MCF 10A (cell line): ENCODE measurements at regions of chr1 and their contacts with region 1.

Region 1: GRCh38 chr1:198157241-198157846 is 546 bp downstream of the NEK7 start:
- DNase-seq: peak; percentile 98
- H3K4me3 Mint-ChIP-seq: peak overlapping the region; percentile 85
- H3K27ac Mint-ChIP-seq: peak overlapping the region; percentile 86
- H3K4me1 Mint-ChIP-seq: peaks cover 42% of the 10 kb centered on the region
- H3K27me3 Mint-ChIP-seq: no peaks in the 10 kb centered on the region
- CTCF ChIP-seq: no peak

Region 2: DNA sequence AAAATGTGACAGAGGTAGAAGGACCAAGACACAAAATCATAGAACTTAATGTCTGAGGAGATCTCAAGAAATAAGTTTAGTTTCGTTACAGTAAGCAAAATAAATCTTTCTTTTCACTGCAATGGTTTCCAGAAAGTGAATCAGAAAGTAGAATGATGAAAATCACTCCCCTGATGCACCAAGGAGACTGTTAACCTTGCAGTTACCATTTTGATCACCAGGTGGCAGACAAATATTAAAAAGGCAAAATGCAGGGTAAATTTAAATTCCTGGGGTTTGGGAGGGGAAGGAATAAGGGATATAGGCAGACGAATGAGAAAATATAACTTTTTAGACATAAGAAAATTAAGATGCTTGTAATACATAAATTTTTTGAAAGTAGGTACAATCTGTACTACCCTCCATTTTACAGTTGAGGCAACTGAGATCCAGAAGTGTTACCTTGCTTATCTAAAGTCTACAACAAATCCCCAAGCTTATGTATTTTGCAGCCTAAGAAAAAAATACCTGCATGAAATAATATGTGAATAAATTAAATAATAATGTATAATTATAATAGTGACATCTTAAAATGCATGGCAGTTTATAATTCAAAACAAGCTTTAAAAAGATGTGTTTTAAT is 636.1 kb before region 1 on chr1:
- CTCF ChIA-PET with region 1: no interaction called
- POLR2A ChIA-PET with region 1: no interaction called
- intact Hi-C with region 1: loop called (anchors 10 kb)
- DNase-seq: peak; percentile 67
- H3K4me3 Mint-ChIP-seq: no peak overlapping the region
- H3K27ac Mint-ChIP-seq: no peak overlapping the region
- H3K4me1 Mint-ChIP-seq: peaks cover 5% of the 10 kb centered on the region
- H3K27me3 Mint-ChIP-seq: no peaks in the 10 kb centered on the region
- CTCF ChIP-seq: peak; percentile 88

Region 3: DNA sequence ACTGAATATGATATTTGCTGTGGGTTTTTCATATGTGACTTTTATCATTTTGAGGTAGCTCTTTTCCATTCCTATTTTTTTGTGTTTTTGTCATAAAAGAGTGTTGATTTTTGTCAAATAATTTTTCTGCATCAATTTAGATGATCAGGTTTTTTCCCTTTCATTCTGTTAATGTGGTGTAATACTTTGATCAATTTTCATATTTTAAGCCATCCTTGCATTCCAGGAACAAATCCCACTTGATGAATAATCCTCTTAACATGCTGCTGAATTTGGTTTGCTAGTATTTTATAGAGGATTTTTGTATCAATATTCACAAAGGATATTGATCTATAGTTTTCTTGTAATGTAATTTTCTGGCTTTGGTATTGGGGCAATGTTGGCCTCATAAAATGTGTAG is 280.4 kb before region 1 on chr1:
- CTCF ChIA-PET with region 1: no interaction called
- POLR2A ChIA-PET with region 1: no interaction called
- intact Hi-C with region 1: no loop called
- DNase-seq: no peak
- H3K4me3 Mint-ChIP-seq: no peak overlapping the region
- H3K27ac Mint-ChIP-seq: no peak overlapping the region
- H3K4me1 Mint-ChIP-seq: no peaks in the 10 kb centered on the region
- H3K27me3 Mint-ChIP-seq: no peaks in the 10 kb centered on the region
- CTCF ChIP-seq: no peak

Region 4: DNA sequence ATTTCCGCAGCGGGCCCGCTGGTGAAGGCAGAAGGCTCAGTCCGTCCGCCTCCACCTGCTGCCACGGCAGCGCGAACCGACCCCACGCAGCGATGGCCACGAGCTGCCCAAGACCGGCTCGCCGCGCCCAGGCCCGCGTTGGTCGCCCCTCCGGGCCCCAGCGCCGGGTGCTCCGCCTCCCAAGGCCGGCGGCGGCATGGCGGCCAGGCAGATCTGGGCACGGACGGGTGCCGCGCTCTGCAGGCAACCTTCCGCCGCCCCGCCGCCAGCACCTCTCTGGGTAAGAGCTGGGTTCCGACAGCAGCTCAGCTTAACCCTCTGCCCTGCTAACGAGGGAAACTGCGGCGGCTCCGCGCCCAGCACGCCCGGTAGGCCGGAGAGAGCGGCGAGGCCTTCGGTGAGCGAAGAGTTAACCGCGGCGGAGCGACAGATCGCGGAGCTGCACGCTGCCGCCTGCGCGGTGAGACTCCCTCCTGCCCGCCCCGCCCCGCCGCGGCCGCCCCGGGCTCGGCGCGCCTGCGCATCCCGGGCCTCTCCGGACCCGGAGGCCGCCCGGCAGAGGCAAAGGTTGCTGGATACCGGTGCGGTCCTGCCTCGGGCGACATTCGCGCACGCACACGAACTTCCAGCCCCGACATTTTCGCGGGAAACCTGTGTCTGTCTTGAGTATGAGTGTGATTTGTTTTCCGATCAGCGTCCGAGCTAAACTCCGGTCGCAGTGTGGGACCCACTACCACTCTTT is 254.7 kb before region 1 on chr1 and contains the start of gene C1orf53:
- CTCF ChIA-PET with region 1: interaction called, 4 read pairs
- POLR2A ChIA-PET with region 1: interaction called, 38 read pairs
- intact Hi-C with region 1: no loop called
- DNase-seq: peak; percentile 92
- H3K4me3 Mint-ChIP-seq: peak within 1 kb of the TSS; percentile 86
- H3K27ac Mint-ChIP-seq: peak within 1 kb of the TSS; percentile 93
- H3K4me1 Mint-ChIP-seq: peaks cover 26% of the 10 kb centered on the region
- H3K27me3 Mint-ChIP-seq: no peaks in the 10 kb centered on the region
- CTCF ChIP-seq: no peak
- total RNA-seq, gene C1orf53: 10.7 and 15.1 TPM in 2 replicates

Region 5: GRCh38 chr1:198088360-198089071 is 68.8 kb before region 1 on chr1:
- CTCF ChIA-PET with region 1: interaction called, 12 read pairs
- POLR2A ChIA-PET with region 1: interaction called, 10 read pairs
- intact Hi-C with region 1: loop called (anchors 1 kb)
- DNase-seq: peak; percentile 64
- H3K4me3 Mint-ChIP-seq: no peak overlapping the region
- H3K27ac Mint-ChIP-seq: no peak overlapping the region
- H3K4me1 Mint-ChIP-seq: peaks cover 7% of the 10 kb centered on the region
- H3K27me3 Mint-ChIP-seq: no peaks in the 10 kb centered on the region
- CTCF ChIP-seq: peak; percentile 71

Region 6: DNA sequence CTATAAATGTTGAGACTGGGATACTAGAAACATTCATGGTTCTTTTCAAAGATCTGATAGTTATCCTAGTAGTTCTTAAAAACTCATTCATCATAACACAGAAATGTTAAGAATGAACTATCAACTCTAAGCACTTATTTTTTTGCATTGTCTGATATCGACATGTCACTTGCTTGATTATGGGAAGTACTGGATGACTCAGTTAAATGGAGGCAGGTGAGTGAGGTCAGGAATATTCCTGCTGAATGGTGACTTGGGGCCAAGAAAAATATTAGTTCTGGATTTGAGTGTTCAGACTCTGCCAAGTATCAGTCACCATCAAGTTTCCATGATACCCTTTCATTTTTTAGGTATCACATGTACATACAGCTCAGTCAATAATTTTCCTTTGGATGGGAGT is 63.1 kb after region 1 on chr1:
- CTCF ChIA-PET with region 1: no interaction called
- POLR2A ChIA-PET with region 1: interaction called, 15 read pairs
- intact Hi-C with region 1: loop called (anchors 2 kb)
- DNase-seq: peak; percentile 97
- H3K4me3 Mint-ChIP-seq: peak overlapping the region; percentile 15
- H3K27ac Mint-ChIP-seq: peak overlapping the region; percentile 79
- H3K4me1 Mint-ChIP-seq: peaks cover 28% of the 10 kb centered on the region
- H3K27me3 Mint-ChIP-seq: no peaks in the 10 kb centered on the region
- CTCF ChIP-seq: no peak

Region 7: DNA sequence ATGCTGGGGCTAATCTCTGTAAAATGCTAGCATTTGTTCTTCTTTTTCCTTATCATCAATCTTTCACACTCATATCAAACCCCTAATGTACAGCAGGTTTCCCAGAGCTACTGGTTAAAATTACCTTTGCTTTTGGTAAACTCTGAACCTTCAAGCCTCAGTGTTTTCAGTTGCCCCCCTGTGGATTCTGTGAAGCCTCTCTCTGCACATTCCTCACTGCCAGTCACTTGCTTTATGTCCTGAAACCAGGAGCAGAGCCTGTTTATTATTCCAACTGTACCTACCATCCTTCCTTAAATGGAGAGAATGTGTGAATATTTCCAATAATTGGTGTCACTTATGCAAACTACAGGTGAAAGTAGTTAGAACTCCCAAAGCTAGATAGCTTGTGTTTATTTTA is 133.7 kb after region 1 on chr1:
- CTCF ChIA-PET with region 1: interaction called, 5 read pairs
- POLR2A ChIA-PET with region 1: interaction called, 17 read pairs
- intact Hi-C with region 1: no loop called
- DNase-seq: no peak
- H3K4me3 Mint-ChIP-seq: no peak overlapping the region
- H3K27ac Mint-ChIP-seq: no peak overlapping the region
- H3K4me1 Mint-ChIP-seq: peaks cover 17% of the 10 kb centered on the region
- H3K27me3 Mint-ChIP-seq: no peaks in the 10 kb centered on the region
- CTCF ChIP-seq: no peak

Region 8: GRCh38 chr1:198465201-198466144 is 308.1 kb after region 1 on chr1:
- CTCF ChIA-PET with region 1: interaction called, 14 read pairs
- POLR2A ChIA-PET with region 1: interaction called, 88 read pairs
- intact Hi-C with region 1: loop called (anchors 1 kb)
- DNase-seq: peak; percentile 79
- H3K4me3 Mint-ChIP-seq: no peak overlapping the region
- H3K27ac Mint-ChIP-seq: peak overlapping the region; percentile 74
- H3K4me1 Mint-ChIP-seq: peaks cover 32% of the 10 kb centered on the region
- H3K27me3 Mint-ChIP-seq: no peaks in the 10 kb centered on the region
- CTCF ChIP-seq: peak; percentile 84